GM13977 (cell line): ENCODE measurements at regions of chr11 and their contacts with region 1.

Region 1: GRCh38 chr11:129922674-129923073 is 27.3 kb upstream of the NFRKB start:
- DNase-seq: no peak
- CTCF ChIP-seq: no peak

Region 2: GRCh38 chr11:130131961-130132850 is 209.5 kb after region 1 on chr11:
- in situ Hi-C with region 1: loop called (anchors 5 kb)
- DNase-seq: peak; percentile 81
- CTCF ChIP-seq: peak; percentile 86